Pancreas (tissue), 10 donors: ENCODE measurements at regions of chr2 and their contacts with region 1.

Region 1: DNA sequence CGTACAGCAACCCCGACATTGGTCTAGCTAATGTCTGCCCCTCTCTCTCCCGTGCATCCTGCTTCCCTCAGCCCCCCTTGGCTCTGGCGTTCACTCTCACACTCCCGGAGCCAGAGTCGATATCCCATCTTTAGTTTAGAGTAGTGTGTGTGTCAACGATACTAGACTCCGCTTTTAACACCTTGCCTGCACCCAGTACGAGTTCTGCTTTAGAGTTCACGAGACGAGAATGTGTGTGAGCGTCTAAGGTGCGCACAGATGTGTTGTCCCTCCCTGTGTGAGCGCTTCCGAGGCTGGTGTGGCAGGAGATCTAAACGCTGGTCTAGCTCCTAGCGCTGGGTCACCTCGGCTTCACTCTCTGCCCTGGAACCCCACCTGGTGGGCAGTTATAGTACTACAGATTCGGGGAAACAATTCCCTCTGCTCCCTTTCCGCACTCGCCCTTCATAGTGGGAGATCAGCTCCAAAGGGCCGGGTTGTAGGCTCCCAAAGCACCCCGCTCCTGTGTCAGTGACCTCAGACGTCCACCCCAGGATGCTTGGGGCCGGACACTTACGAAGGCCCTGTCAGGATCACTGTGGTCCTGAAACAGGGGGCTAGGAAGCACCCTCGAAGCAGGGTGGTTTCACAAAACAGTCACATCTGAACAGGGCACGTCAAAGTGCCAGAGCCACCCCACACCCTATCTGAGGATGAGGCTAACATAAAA is 2.6 kb upstream of the CYP26B1 start:
- DNase-seq: peak; percentile 66 to 84 (median 77)
- ATAC-seq: peak; percentile 81 to 95 (median 92)
- H3K4me3 ChIP-seq: peak overlapping the region in 2 of 4 donors; percentile 41 to 49
- H3K27ac ChIP-seq: no peak overlapping the region
- H3K4me1 ChIP-seq: peaks cover 8 to 25% (median 12%) of the 10 kb centered on the region in 3 donors
- H3K27me3 ChIP-seq: peaks cover 0 to 16% (median 2%) of the 10 kb centered on the region in 4 donors
- CTCF ChIP-seq: peak; percentile 68 to 87 (median 76)

Region 2: GRCh38 chr2:71545572-71546274 is 604.6 kb before region 1 on chr2:
- intact Hi-C with region 1: loop called (anchors 5 to 10 kb)
- DNase-seq: peak in 4 of 6 donors; percentile 21 to 53 (median 38)
- ATAC-seq: peak; percentile 75 to 88 (median 84)
- H3K4me3 ChIP-seq: peak overlapping the region in 2 of 4 donors; percentile 11 to 26
- H3K27ac ChIP-seq: no peak overlapping the region
- H3K4me1 ChIP-seq: no peaks in the 10 kb centered on the region
- H3K27me3 ChIP-seq: peaks cover 0 to 7% (median 0%) of the 10 kb centered on the region in 4 donors
- CTCF ChIP-seq: peak; percentile 10 to 50 (median 38)

Region 3: DNA sequence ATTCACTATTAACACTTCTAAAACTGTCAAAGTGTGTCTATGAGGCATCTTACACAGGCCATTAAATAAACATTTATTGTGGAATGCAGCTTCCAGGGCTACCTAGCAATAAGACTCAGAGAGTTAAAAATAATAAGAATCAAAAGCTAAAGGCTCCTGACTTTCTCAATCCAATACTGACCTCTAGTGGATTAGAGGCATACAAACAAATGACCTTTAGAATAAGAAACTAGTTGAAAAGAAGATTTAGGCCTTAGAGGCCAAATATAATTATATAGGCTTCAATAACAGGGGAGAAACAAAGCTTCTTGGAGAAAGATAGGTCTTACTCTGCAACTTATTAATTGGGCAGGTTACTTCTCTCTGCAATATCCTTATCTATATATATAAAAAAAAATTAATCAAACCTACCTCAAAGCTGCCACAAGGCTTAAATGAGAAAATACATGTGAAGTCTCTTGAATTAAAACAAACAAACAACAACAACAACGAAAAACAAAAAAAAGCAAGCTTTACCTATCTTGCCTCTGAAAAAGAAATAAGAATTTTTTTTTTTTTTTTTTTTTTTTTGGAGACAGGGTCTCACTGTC is 429.4 kb after region 1 on chr2:
- intact Hi-C with region 1: loop called in 1 of 3 experiments (anchors 10 kb)
- DNase-seq: no peak
- ATAC-seq: peak in 3 of 4 donors; percentile 67 to 73 (median 73)
- H3K4me3 ChIP-seq: no peak overlapping the region
- H3K27ac ChIP-seq: no peak overlapping the region
- H3K4me1 ChIP-seq: peaks cover 0 to 3% (median 0%) of the 10 kb centered on the region in 3 donors
- H3K27me3 ChIP-seq: no peaks in the 10 kb centered on the region
- CTCF ChIP-seq: peak; percentile 15 to 52 (median 43)

Region 4: DNA sequence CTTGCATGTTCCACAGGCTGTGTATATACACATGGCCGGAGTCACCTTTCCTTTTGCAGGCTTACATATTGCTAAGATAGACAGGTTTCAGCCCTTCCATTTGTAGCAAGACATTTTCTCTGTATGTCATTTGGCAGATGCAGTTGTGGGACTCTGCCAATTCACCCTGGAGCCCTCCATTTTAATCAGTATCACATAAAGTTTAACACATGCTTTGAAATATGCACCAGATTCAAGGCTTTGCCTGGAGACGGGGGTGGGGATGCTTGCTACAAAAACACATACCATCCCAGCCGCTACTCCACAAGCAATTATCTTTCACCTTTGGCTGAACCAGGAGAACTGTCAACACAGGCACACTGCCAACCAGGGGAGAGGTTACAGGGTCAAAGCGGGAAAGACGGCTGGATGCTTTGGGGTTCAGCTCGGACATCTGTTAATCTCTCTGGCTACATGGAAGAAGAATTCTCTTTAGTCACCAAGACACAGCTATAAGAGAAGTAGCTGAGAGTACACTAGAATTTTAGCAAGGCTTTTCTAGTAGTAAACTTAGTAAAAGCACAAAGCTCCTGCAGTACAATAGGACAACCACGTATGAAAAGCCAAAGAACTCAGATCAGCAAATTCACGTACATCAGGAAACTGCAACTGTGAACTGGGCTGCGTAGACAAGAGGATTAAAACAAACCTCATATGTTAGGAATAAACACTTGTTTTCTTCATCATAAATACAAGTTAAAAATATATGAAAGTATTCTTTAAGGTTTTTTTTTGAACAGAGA is 544.6 kb after region 1 on chr2:
- intact Hi-C with region 1: no loop called
- DNase-seq: peak in 4 of 6 donors; percentile 27 to 50 (median 31)
- ATAC-seq: peak; percentile 18 to 71 (median 54)
- H3K4me3 ChIP-seq: no peak overlapping the region
- H3K27ac ChIP-seq: no peak overlapping the region
- H3K4me1 ChIP-seq: peaks cover 0 to 13% (median 3%) of the 10 kb centered on the region in 3 donors
- H3K27me3 ChIP-seq: no peaks in the 10 kb centered on the region
- CTCF ChIP-seq: no peak